AG04449 (cell line): ENCODE measurements at regions of chr3 and their contacts with region 1.

Region 1: DNA sequence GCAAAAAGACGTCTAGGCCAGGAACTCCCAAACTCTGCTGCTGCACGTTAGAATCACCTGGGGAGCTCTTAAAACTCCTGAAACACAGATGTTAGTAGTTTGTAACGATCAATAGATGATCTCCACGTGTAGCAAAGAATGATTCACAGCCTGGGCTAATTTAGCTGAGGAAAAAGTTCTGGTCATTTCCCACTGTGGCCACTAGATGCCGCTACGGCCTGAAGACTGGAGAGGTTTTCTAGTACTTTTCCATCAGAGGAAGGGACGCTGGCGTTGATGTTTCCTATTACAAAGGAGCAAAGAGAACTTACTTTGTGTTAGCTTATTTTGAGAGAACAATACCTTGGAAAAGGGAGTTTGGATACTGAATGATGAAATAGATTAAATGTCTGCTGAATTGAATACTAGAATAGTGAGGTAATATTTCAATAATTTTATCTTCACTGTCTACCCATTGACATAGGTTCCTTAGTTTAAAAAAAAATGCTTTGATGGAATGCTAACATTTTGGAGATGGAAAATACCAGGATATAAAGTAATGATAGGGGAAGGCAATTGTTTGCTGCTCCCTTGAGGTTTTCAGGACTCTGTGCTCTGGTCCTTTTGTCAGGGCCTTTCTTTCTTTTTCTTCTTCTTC is 159.1 kb downstream of the P3H2 start:
- DNase-seq: no peak
- H3K4me3 ChIP-seq: no peak overlapping the region
- CTCF ChIP-seq: peak; percentile 82

Region 2: GRCh38 chr3:189270248-189270832 is 691.3 kb before region 1 on chr3:
- CTCF ChIA-PET with region 1: interaction called, 28 read pairs
- POLR2A ChIA-PET with region 1: no interaction called
- DNase-seq: peak; percentile 74
- H3K4me3 ChIP-seq: no peak overlapping the region
- CTCF ChIP-seq: peak; percentile 85

Region 3: GRCh38 chr3:189981668-189982067 is 20.0 kb after region 1 on chr3:
- CTCF ChIA-PET with region 1: interaction called, 62 read pairs
- POLR2A ChIA-PET with region 1: no interaction called
- DNase-seq: peak; percentile 93
- H3K4me3 ChIP-seq: no peak overlapping the region
- CTCF ChIP-seq: no peak

Region 4: DNA sequence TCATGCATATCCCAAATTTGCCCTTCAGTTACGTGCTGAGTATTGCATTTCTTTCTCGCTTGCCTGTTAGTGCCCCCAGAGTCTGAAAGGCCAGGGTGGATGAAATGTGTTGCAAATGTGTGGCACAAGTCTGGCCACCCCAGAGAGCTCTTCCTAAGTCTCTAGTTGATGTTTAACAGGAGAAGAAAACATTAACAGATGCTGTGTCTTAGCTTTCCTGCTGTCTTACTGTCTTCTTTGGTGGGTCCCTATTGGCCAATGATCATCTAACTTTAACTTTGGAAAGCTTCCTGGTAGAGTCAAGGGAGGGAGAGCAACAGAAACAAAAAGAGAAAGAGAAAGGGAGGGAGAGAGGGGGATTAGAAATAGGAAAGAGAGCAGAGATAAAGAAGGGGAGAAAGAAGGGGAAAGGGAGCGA is 235.7 kb after region 1 on chr3:
- CTCF ChIA-PET with region 1: interaction called, 164 read pairs
- POLR2A ChIA-PET with region 1: no interaction called
- DNase-seq: no peak
- H3K4me3 ChIP-seq: no peak overlapping the region
- CTCF ChIP-seq: no peak

Region 5: GRCh38 chr3:190265796-190266195 is 304.2 kb after region 1 on chr3:
- CTCF ChIA-PET with region 1: no interaction called
- POLR2A ChIA-PET with region 1: no interaction called
- DNase-seq: peak; percentile 61
- H3K4me3 ChIP-seq: no peak overlapping the region
- CTCF ChIP-seq: no peak

Region 6: DNA sequence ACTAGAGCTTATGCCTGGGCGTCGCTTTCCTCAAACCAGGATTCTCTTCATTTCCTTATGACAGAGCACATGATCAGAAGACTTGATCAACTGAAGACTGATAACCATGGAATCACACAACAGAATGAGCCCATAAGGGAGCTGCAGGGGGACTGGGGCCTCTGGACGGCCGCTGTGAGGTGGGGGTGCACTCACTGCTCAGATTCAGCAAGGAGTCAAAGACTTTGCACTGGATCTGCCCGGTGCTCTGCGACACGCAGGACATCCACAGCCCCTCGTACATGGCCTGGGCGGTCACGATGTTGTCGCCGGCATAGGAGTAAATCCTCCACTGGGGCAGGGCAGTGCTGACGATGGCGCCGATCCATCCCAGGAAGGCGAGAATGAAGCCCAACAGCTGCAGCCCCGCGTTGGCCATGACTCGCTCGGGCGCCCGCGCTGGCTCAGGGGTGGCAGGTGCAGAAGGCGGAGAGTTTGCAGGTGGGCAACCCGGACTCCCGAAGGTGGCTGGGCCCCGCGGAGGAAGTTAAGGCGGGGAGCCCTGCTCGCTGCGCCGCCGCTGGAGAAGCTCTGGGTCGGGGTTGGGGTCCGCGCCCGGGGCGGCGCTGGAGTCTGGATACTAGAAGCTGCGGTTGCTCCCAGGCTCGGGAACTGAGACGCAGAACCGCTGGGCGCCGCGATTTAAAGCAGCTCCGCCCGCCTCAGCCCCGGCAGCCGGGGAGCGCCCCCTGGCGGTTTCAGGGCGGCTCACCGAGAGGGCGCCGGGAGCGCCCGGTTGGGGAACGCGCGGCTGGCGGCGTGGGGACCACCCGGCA is 360.4 kb after region 1 on chr3 and contains the start of gene CLDN1:
- CTCF ChIA-PET with region 1: interaction called, 80 read pairs
- POLR2A ChIA-PET with region 1: interaction called, 3 read pairs
- DNase-seq: no peak
- H3K4me3 ChIP-seq: peak within 1 kb of the TSS; percentile 64
- CTCF ChIP-seq: peak; percentile 95

Region 7: GRCh38 chr3:190443257-190443656 is 481.6 kb after region 1 on chr3:
- CTCF ChIA-PET with region 1: interaction called, 43 read pairs
- POLR2A ChIA-PET with region 1: no interaction called
- DNase-seq: no peak
- H3K4me3 ChIP-seq: no peak overlapping the region
- CTCF ChIP-seq: peak; percentile 32